ENCODE measurements at regions of chr1 and their contacts with region 1.

Region 1: GRCh38 chr1:155479205-155479604 is 83.4 kb downstream of the ASH1L start:
- DNase-seq: no peak
- ATAC-seq: no peak
- H3K4me3 ChIP-seq: no peak overlapping the region
- H3K27ac ChIP-seq: no peak overlapping the region
- H3K4me1 ChIP-seq: peaks cover 0 to 12% (median 0%) of the 10 kb centered on the region in 12 donors
- H3K27me3 ChIP-seq: no peaks in the 10 kb centered on the region
- CTCF ChIP-seq: no peak
- POLR2A ChIP-seq: no peak

Region 2: DNA sequence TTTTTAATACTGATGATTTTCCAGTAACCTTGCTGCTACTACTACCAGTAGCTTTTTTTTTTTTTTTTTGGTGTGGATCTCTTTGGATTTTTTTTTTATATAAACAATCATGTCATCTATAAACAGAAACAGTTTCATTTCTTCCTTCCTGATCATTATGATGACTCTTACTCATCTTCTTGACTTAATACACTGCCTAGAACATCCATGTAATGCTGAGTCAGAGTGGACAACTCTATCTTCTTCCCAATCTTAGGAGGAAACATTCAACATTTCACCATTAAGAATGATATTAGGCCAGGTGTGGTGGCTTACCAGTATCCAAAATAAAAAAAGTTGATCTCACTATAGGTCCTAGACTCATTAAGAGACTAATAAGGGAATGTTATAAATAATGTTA is 89.4 kb before region 1 on chr1:
- intact Hi-C with region 1: loop called in 1 of 10 experiments (anchors 5 kb)
- DNase-seq: no peak
- ATAC-seq: no peak
- H3K4me3 ChIP-seq: no peak overlapping the region
- H3K27ac ChIP-seq: no peak overlapping the region
- H3K4me1 ChIP-seq: no peaks in the 10 kb centered on the region
- H3K27me3 ChIP-seq: no peaks in the 10 kb centered on the region
- CTCF ChIP-seq: no peak
- POLR2A ChIP-seq: no peak

Measured in heart left ventricle (tissue), 16 donors.